WTC11 (cell line): ENCODE measurements at regions of chr12 and their contacts with region 1.

Region 1: GRCh38 chr12:6944381-6945186 is 762 bp downstream of the C12orf57 start:
- DNase-seq: peak; percentile 92
- ATAC-seq: peak; percentile 25
- H3K4me3 Mint-ChIP-seq: peak overlapping the region; percentile 98
- H3K27ac Mint-ChIP-seq: peak overlapping the region; percentile 99
- H3K4me1 Mint-ChIP-seq: peaks cover 34% of the 10 kb centered on the region
- H3K27me3 Mint-ChIP-seq: no peaks in the 10 kb centered on the region
- CTCF ChIP-seq: no peak

Region 2: GRCh38 chr12:6959058-6959804 is 14.6 kb after region 1 on chr12:
- CTCF ChIA-PET with region 1: interaction called, 296 read pairs
- POLR2A ChIA-PET with region 1: interaction called, 167 read pairs
- DNase-seq: no peak
- ATAC-seq: no peak
- H3K4me3 Mint-ChIP-seq: no peak overlapping the region
- H3K27ac Mint-ChIP-seq: no peak overlapping the region
- H3K4me1 Mint-ChIP-seq: peaks cover 37% of the 10 kb centered on the region
- H3K27me3 Mint-ChIP-seq: no peaks in the 10 kb centered on the region
- CTCF ChIP-seq: no peak

Region 3: DNA sequence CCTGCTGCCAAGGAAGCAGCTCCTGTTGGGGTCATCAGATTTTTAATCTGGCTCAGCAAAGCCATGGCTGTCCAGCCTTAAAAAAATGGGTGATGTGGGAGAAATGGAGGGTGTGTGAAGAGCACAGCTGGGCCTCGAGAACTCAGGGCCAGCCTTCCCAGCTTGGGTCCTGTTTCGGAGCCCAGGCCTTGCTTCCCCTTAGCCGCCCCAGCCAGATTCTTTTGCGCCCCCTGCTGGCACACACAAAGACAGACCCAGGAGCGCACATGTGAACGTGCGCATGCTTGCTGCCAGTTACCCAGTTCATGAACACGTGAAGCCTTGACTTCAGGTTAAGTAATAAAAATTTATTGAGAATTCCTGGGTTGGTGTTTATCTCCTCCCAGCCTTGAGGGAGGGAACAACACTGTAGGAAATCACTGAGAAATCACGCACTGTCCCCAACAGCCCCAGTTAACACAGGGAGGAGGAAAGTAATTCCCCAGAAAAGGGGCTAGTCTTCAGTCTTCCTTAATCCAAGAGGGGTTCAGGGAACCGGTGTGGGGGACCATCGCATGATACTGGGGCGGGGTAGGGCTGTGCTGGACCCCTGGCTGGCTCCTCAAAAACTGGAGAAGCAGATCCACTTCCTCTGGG is 20.6 kb after region 1 on chr12:
- CTCF ChIA-PET with region 1: interaction called, 296 read pairs
- POLR2A ChIA-PET with region 1: interaction called, 167 read pairs
- DNase-seq: peak; percentile 85
- ATAC-seq: peak; percentile 25
- H3K4me3 Mint-ChIP-seq: peak overlapping the region; percentile 75
- H3K27ac Mint-ChIP-seq: peak overlapping the region; percentile 95
- H3K4me1 Mint-ChIP-seq: peaks cover 60% of the 10 kb centered on the region
- H3K27me3 Mint-ChIP-seq: no peaks in the 10 kb centered on the region
- CTCF ChIP-seq: peak; percentile 71

Region 4: DNA sequence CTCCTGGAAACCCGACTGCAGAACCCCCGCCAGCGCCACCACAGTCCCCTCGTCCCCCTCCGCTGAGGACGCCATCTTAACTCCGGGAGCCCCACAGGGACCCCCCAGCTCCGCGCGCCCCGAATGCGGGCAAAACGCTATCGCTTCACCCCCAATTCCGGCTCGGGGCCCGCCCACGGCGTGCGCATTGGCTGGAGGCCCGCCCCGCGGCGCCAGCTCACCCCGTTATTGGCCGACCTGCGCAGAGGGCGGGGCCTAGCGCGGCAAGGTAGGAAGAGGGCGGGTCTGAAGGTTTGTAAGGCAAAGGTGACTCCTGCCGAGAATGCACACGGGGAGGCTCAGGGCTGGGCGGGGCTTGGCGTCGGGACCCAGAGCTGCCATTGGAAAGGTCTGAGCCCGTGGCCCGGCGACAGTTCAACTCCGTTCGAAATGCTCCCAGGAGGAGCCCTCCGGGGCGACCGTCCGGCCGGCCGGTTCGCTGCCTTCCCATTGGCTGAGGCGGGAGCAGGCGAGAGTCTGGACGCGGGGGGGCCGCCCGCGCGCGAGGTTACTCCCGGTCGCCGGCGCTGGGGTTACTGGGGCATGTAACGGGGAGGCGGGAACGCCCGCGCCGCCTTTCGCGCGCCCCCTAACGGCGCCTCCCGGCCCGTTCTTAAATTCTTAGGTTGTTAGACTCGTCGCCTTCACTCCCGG is 73.9 kb after region 1 on chr12 and contains the start of gene LPCAT3:
- CTCF ChIA-PET with region 1: interaction called, 11 read pairs
- POLR2A ChIA-PET with region 1: interaction called, 10 read pairs
- DNase-seq: peak; percentile 98
- ATAC-seq: peak; percentile 94
- H3K4me3 Mint-ChIP-seq: peak within 1 kb of the TSS; percentile 95
- H3K27ac Mint-ChIP-seq: peak within 1 kb of the TSS; percentile 87
- H3K4me1 Mint-ChIP-seq: peaks cover 27% of the 10 kb centered on the region
- H3K27me3 Mint-ChIP-seq: no peaks in the 10 kb centered on the region
- CTCF ChIP-seq: peak; percentile 60
- total RNA-seq, gene LPCAT3: 35.3 to 40.0 TPM (median 36.2 TPM) in 3 replicates